WTC11 (cell line): ENCODE measurements at regions of chr3 and their contacts with region 1.

Region 1: GRCh38 chr3:125229168-125229567 is 16.6 kb upstream of the SLC12A8 start:
- DNase-seq: no peak
- ATAC-seq: no peak
- H3K4me3 Mint-ChIP-seq: no peak overlapping the region
- H3K27ac Mint-ChIP-seq: peak overlapping the region; percentile 52
- H3K4me1 Mint-ChIP-seq: peaks cover 29% of the 10 kb centered on the region
- H3K27me3 Mint-ChIP-seq: no peaks in the 10 kb centered on the region
- CTCF ChIP-seq: no peak

Region 2: GRCh38 chr3:125480656-125481374 is 251.6 kb after region 1 on chr3:
- CTCF ChIA-PET with region 1: no interaction called
- POLR2A ChIA-PET with region 1: interaction called, 10 read pairs
- DNase-seq: no peak
- ATAC-seq: no peak
- H3K4me3 Mint-ChIP-seq: no peak overlapping the region
- H3K27ac Mint-ChIP-seq: no peak overlapping the region
- H3K4me1 Mint-ChIP-seq: peaks cover 6% of the 10 kb centered on the region
- H3K27me3 Mint-ChIP-seq: no peaks in the 10 kb centered on the region
- CTCF ChIP-seq: no peak